ENCODE measurements at regions of chr12 and their contacts with region 1.

Region 1: GRCh38 chr12:122190842-122191668 is 8.1 kb downstream of the LRRC43 start:
- DNase-seq: peak; percentile 83
- ATAC-seq: peak; percentile 88
- H3K4me3 Mint-ChIP-seq: no peak overlapping the region
- H3K27ac Mint-ChIP-seq: no peak overlapping the region
- H3K4me1 Mint-ChIP-seq: no peaks in the 10 kb centered on the region
- H3K27me3 Mint-ChIP-seq: peaks cover 7% of the 10 kb centered on the region

Region 2: DNA sequence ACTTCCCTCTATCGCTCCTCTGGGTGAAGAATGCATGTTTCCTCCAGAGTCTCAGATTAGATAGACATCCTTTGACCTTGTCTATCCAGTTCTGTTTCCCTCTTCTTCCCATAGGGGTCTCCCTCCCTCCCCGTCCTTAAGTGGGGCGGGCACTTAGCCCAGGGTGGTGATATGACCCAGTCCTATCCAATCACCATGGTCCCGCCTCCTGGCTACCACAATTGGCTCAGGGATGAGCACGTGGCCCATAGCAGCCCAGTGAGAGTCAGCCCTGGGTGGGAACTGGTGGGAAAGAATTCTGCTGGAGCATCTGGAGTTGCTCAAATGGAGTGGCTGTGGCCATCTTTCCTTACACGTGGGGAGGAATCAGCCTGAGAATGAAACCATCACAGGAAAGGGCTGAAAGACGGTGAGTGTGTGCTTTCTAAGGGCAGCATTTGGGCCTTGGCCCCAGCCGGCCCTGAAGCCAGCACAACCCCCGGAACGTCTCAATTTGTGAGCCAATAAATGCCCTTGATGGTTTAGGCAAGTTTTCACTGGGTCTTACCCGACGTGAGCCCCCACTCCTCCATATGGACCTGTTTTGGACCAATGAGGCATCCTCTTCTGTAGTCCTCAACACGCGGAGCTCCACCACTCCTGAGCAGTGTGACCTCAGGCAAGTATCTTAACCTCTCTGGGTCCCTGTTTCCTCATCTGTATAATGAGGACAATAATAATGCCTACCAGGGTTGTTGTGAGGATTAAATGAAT is 126.9 kb before region 1 on chr12:
- CTCF ChIA-PET with region 1: no interaction called
- POLR2A ChIA-PET with region 1: no interaction called
- DNase-seq: peak; percentile 50
- ATAC-seq: peak; percentile 73
- H3K4me3 Mint-ChIP-seq: no peak overlapping the region
- H3K27ac Mint-ChIP-seq: peak overlapping the region; percentile 22
- H3K4me1 Mint-ChIP-seq: peaks cover 33% of the 10 kb centered on the region
- H3K27me3 Mint-ChIP-seq: no peaks in the 10 kb centered on the region

Region 3: DNA sequence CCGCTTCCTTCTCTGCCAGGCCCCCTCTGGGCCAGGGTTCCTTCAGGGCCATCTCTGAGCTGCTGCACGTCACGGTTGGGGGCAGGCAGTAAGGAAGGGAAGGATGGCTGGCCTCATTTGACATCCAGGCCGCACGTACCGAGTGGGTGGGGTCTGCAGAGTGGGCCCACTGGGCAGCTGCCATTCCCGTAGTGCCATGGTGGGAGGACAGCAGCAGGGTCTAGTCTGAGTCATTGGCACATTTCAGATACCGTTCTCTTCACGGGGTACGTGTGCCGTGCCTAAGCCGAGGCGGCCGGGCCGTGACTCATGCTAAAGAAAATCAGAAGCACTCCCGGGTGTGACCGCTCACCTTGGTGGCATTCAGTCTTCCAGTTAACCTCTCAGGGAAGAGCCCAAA is 60.9 kb before region 1 on chr12:
- CTCF ChIA-PET with region 1: interaction called, 13 read pairs
- POLR2A ChIA-PET with region 1: no interaction called
- DNase-seq: no peak
- ATAC-seq: no peak
- H3K4me3 Mint-ChIP-seq: no peak overlapping the region
- H3K27ac Mint-ChIP-seq: no peak overlapping the region
- H3K4me1 Mint-ChIP-seq: peaks cover 12% of the 10 kb centered on the region
- H3K27me3 Mint-ChIP-seq: no peaks in the 10 kb centered on the region

Region 4: DNA sequence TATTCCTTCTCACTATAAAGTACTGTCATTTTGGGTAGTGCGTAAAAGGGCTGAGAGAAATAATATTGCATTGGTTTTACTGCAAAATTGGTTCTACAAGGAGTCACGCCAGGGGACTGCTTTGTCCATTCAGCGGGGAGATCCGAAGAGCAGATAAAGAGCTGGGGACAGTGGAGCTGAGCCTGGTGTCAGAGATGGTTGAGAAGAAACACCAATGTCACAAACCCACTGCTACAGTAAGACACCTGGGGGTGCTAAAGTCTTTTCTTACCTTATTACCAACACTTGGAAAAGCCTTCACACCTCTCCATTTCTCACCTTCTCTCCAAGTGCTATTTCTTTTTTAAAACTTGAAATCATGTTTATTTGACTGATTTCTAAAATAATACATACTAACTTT is 31.2 kb before region 1 on chr12:
- CTCF ChIA-PET with region 1: interaction called, 14 read pairs
- POLR2A ChIA-PET with region 1: no interaction called
- DNase-seq: no peak
- ATAC-seq: no peak
- H3K4me3 Mint-ChIP-seq: no peak overlapping the region
- H3K27ac Mint-ChIP-seq: no peak overlapping the region
- H3K4me1 Mint-ChIP-seq: peaks cover 20% of the 10 kb centered on the region
- H3K27me3 Mint-ChIP-seq: peaks cover 2% of the 10 kb centered on the region